ENCODE measurements at regions of chr5 and their contacts with region 1.

Region 1: GRCh38 chr5:93620487-93621326 is 37.7 kb downstream of the NR2F1 start:
- DNase-seq: peak; percentile 72
- H3K4me3 Mint-ChIP-seq: peak overlapping the region; percentile 89
- H3K27ac Mint-ChIP-seq: peak overlapping the region; percentile 76
- H3K4me1 Mint-ChIP-seq: peaks cover 6% of the 10 kb centered on the region
- H3K27me3 Mint-ChIP-seq: no peaks in the 10 kb centered on the region
- CTCF ChIP-seq: no peak

Region 2: DNA sequence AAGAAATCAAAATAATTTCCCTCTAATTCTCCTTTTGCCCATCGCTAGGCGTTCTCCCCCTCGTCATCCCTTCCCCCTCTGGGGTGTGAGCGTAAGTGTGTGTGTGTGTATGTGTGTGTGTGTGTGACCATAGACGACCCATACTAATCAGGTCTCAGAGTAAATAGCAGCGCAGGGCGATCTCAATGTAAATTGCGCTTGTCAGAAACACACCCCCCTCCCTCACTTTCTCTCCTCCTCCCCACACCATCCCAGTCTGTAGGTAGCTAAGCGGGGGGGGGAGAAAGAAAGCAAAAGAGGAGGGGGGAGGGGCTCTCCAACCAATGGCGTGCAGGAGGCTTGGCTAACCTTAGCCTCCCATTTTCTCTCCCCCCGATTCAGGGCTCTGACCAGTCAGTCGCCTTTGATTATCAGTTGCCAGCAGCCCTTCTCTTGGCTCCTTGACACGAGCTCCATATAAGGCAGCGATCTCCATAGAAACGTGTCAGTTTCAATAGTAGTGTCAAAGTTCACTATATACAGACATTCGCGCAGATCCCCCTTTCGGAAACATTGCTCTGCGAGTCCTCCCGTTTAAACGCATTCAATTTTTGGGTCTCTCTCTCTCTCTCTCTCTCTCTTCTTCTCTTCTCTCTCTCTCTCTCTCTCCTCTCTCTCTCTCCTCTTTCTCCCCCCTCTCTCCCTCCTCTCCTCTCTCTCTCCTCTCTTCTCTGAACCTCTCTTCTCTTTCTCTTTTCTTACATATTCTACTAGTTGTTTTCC is 37.8 kb before region 1 on chr5 and contains the start of gene NR2F1:
- CTCF ChIA-PET with region 1: no interaction called
- POLR2A ChIA-PET with region 1: no interaction called
- intact Hi-C with region 1: no loop called
- DNase-seq: peak; percentile 92
- H3K4me3 Mint-ChIP-seq: no peak within 1 kb of the TSS
- H3K27ac Mint-ChIP-seq: no peak within 1 kb of the TSS
- H3K4me1 Mint-ChIP-seq: peaks cover 11% of the 10 kb centered on the region
- H3K27me3 Mint-ChIP-seq: no peaks in the 10 kb centered on the region
- CTCF ChIP-seq: no peak
- total RNA-seq, gene NR2F1: 1.4 and 1.7 TPM in 2 replicates

Region 3: DNA sequence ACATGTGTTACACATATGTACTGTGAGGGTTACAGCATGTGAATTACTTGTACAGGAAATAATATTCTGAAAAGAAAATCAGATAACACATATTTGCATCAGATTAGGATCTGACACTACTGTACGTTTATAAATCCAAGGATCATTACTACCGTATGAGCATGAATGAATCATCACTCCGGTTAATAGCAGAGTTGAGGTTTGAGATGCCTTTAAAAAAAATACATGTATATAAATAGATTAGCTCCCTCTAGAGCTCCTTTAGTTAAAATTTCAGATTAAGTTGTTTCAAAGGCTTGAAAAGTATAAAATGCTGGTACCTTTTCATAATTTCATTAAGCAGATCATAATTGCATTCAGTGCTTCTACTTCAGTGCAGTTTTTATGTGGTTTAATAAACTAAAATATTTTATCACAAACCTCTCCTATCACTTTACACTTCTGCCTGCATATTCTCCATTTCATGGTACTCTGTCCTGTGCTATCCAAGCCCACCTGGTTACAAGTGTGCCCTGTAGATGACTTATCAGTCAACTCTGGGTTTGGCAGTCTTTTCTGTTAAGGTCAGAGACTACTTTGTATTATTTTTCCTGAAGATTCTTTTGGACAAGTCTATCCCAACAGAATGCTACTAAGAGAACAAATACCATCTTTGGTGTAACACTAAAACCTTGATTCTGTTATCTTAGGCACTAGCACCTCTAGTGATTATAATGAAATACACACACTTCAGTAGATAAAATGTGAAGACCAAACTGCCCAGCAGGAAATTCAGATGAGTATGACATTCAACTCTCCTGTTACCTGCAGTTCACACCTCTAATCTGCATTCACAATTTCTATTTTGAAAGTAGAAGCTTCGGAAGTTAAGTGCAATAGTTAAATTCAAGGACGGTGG is 168.7 kb after region 1 on chr5:
- CTCF ChIA-PET with region 1: interaction called, 3 read pairs
- POLR2A ChIA-PET with region 1: interaction called, 3 read pairs
- intact Hi-C with region 1: loop called (anchors 5 kb)
- DNase-seq: peak; percentile 43
- H3K4me3 Mint-ChIP-seq: no peak overlapping the region
- H3K27ac Mint-ChIP-seq: no peak overlapping the region
- H3K4me1 Mint-ChIP-seq: peaks cover 5% of the 10 kb centered on the region
- H3K27me3 Mint-ChIP-seq: no peaks in the 10 kb centered on the region
- CTCF ChIP-seq: no peak

Region 4: GRCh38 chr5:93915142-93915553 is 294.4 kb after region 1 on chr5:
- CTCF ChIA-PET with region 1: no interaction called
- POLR2A ChIA-PET with region 1: no interaction called
- intact Hi-C with region 1: loop called (anchors 10 kb)
- DNase-seq: peak; percentile 45
- H3K4me3 Mint-ChIP-seq: no peak overlapping the region
- H3K27ac Mint-ChIP-seq: no peak overlapping the region
- H3K4me1 Mint-ChIP-seq: no peaks in the 10 kb centered on the region
- H3K27me3 Mint-ChIP-seq: no peaks in the 10 kb centered on the region
- CTCF ChIP-seq: peak; percentile 48

Measured in MCF 10A (cell line).